Dendritic cell treated with granulocyte-macrophage colony-stimulating factor and Interleukin-4, amounts not matched to agents 40 ng/mL and 50 ng/mL, for 4 days (primary cell): ENCODE measurements at regions of chr6 and their contacts with region 1.

Region 1: DNA sequence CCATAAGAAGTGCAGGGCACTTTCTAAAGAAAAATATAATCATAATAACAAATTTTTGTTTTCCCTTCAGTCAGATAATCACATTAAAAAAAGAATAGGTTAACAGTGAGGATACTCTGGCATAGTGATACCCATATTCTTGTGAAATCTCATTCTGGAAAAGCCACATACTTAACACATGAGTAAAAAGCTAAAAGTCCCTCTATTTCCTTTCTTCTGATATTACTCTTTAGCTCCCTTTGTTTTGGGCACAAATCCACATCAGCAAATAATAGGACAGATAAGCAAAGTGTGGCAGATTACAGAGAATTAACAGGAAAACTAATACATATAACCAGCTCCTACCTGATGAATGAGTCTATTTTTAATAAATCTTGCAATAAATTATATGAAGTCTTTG is 15.8 kb downstream of the SHPRH start:
- H3K4me3 Mint-ChIP-seq: no peak overlapping the region
- H3K27ac Mint-ChIP-seq: no peak overlapping the region
- H3K4me1 Mint-ChIP-seq: no peaks in the 10 kb centered on the region
- H3K27me3 Mint-ChIP-seq: no peaks in the 10 kb centered on the region

Region 2: DNA sequence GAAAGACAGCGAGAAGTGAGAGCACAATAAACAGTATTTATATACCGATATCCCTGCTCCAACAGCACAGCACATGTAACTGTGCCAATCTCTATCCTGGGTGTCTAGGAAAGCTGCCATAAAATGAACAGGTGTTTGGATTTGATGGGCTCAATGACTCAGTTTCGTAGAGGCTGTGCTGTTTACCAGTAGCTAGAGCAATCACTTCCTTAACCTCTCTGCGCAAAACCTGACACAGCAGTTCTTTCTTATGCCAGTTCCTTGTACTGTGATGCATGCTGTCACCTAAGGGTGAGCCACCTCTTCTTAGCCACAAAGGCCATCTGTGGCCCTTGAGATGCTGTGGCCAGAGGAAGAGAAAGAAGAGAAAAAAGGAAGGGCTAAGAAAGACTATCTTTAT is 43.5 kb before region 1 on chr6:
- intact Hi-C with region 1: loop called (anchors 5 kb)
- H3K4me3 Mint-ChIP-seq: no peak overlapping the region
- H3K27ac Mint-ChIP-seq: peak overlapping the region; percentile 37
- H3K4me1 Mint-ChIP-seq: peaks cover 19% of the 10 kb centered on the region
- H3K27me3 Mint-ChIP-seq: no peaks in the 10 kb centered on the region